Calu3 (cell line): ENCODE measurements at regions of chr20 and their contacts with region 1.

Region 1: DNA sequence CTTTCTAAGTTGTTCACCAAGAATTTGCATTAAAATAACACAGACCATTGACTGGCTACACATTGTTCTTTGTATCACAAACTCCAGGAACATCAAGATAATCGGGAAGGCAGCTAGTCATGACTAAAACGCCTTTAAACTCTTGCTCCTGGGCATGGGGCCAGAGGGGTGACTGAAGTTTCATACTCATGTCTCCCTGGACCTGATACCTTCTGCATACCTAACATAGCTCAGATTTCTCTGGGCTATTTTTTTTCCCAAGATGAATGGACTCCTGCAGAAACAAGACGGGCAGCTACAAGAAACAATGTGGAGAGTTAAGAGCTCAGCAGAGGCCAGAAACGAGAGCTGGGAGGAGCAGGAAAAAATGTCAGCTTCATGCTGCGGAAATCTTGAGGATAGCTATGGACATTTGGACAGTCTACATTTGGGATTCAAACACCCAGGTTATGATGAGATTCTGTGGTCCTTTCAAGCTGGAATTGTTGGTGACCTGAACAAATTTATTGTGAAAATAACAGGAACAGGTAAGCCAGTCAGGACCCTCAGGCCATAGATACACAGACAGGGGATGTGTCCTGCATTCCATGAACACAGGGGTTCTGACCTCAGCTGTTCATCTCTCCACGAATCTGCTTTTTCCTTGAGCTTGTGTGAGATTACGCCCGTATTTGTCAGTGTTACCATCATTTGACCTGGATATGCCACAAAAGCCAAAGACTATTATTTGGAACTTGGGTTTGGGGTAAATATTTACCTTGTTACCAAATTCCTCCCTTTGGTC is 289.2 kb downstream of the PREX1 start:
- DNase-seq: peak; percentile 96
- H3K4me3 Mint-ChIP-seq: peak overlapping the region; percentile 24
- H3K27ac Mint-ChIP-seq: peak overlapping the region; percentile 79
- H3K4me1 Mint-ChIP-seq: peaks cover 52% of the 10 kb centered on the region
- H3K27me3 Mint-ChIP-seq: no peaks in the 10 kb centered on the region
- CTCF ChIP-seq: no peak

Region 2: GRCh38 chr20:48374991-48375595 is 163.5 kb before region 1 on chr20:
- CTCF ChIA-PET with region 1: interaction called, 4 read pairs
- intact Hi-C with region 1: loop called (anchors 10 kb)
- DNase-seq: no peak
- H3K4me3 Mint-ChIP-seq: peak overlapping the region; percentile 68
- H3K27ac Mint-ChIP-seq: peak overlapping the region; percentile 99
- H3K4me1 Mint-ChIP-seq: peaks cover 83% of the 10 kb centered on the region
- H3K27me3 Mint-ChIP-seq: no peaks in the 10 kb centered on the region
- CTCF ChIP-seq: no peak

Region 3: DNA sequence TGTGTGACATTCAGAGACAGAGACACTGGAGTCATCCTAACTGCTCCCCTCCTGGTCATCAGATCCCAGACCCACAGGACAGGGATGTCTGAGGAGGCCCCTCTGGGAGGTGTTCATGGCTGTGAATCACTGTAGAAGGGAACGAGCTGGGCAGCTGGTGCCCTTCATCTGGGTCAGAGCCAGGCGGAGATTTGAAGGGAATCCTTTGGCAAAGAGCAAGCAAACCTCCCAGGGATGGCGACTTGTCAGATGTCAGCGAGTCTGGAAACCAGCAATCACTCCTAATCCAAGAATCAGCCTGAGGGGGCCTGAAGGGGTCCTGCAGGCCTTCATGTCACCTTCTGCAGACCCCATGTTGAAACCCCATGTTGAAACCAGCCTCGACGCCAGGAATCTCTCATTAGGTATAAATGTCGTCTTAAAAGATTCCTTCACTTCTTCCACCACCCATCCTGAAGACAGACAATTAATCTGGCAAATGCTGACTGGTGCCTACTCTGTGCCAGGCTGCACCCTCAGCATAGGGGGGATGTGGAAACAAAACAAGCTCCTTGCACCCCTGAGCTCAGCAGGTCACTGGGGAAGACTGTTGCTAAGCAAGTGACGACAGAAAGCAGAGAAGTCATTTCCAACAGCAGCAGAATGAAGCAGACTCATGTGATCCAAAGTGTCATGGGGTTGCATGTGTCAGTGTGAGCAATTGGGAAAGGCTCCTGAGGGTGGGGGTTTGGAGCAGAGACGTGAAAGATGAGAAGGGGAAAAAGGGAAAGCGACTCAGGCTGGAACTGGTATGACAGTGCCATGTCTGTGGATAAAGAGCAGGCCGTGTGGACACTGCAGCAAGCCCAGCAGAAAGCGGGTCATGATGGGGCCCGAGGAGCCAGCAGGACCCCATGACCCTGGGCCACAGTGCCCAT is 75.0 kb before region 1 on chr20:
- CTCF ChIA-PET with region 1: no interaction called
- intact Hi-C with region 1: no loop called
- DNase-seq: no peak
- H3K4me3 Mint-ChIP-seq: no peak overlapping the region
- H3K27ac Mint-ChIP-seq: no peak overlapping the region
- H3K4me1 Mint-ChIP-seq: no peaks in the 10 kb centered on the region
- H3K27me3 Mint-ChIP-seq: peaks cover 50% of the 10 kb centered on the region
- CTCF ChIP-seq: no peak